Activated CD4-positive, alpha-beta T cell treated with anti-CD3 and anti-CD28 coated beads, Interleukin-2, amount 10 ng/mL, durations not matched to agents 24 days and 14 days (primary cell): ENCODE measurements at regions of chr11 and their contacts with region 1.

Region 1: GRCh38 chr11:125345421-125346178 is 150.5 kb downstream of the FEZ1 start:
- DNase-seq: peak; percentile 79
- H3K4me3 Mint-ChIP-seq: no peak overlapping the region
- H3K27ac Mint-ChIP-seq: no peak overlapping the region
- H3K4me1 Mint-ChIP-seq: no peaks in the 10 kb centered on the region
- H3K27me3 Mint-ChIP-seq: peaks cover 3% of the 10 kb centered on the region

Region 2: DNA sequence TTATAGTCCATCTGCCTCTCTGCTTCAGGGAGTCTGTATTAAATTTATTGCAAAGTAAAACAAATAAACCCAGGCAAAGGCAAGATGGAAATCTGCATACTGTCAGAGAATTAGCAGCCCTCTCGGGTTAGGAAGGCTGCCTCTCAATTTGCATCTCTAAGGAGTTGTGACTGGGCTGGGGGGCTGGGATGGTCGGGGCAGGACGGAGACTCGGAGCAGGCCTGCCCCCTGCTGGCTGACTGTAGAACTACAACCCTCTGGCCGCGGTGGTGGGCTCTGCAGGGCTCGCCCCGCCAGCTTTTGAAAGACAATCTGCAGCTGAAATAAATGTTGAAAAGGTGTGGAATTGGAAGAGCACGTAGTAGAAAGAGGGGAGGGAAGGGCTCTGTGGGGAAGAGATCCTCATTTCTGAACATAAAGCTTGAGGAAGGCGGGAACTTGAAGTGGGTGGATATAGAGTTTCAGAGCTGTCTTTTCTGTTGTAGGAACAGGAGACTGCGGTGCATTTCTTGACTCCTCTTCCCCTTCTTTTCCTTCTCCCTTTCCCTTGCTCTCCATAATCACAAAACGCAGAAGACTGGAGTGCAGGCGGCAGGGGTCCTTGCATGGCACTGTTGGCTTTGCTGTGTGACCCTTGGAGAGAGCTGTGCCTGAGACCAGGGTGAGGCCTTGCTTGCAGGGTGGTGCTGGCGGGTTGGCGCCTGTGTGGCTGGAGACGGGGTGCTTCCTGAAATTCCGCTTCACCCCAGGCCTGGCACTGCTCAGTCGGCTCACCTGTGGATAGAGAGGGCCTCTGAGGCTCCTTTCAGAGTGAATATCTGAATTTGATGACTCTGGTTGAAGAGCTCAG is 203.7 kb before region 1 on chr11:
- intact Hi-C with region 1: no loop called
- DNase-seq: peak; percentile 87
- H3K4me3 Mint-ChIP-seq: no peak overlapping the region
- H3K27ac Mint-ChIP-seq: no peak overlapping the region
- H3K4me1 Mint-ChIP-seq: peaks cover 3% of the 10 kb centered on the region
- H3K27me3 Mint-ChIP-seq: peaks cover 38% of the 10 kb centered on the region

Region 3: DNA sequence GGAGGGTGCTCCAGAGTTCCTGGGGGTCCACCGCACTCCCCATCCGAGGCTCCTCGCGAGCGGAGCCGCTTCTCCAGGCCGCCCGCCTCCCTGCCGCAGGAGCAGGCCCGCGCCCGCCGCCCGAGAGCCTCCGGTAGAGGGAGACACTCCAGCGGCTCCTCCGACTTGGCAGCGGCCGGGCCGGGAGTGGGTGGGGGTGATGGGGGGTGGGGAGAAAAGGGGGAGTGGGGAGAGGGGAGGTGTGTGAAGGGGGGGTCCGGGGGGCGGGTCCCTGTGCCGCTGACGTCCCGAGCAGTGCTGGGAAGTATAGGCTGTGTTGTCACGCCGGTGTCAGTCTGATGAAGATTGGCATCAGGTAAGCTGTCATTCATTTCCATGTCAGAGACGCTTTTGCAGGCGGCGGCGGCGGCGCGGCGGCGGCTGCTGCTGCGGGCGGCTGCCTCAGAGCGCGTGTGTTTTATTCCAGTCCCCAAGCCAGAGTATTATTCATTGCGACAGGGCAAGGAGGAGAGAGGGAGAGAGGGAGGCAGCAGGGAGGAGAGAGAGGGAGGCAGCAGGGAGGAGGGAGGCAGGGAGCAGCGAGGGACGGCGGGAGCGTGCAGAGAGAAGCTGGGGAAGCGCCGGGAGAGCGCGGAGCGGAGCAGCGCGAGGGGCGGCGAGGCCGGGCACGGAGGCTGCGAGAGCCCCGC is 181.0 kb before region 1 on chr11 and contains the start of gene PKNOX2:
- intact Hi-C with region 1: loop called (anchors 10 kb)
- DNase-seq: peak; percentile 87
- H3K4me3 Mint-ChIP-seq: peak within 1 kb of the TSS; percentile 94
- H3K27ac Mint-ChIP-seq: peak within 1 kb of the TSS; percentile 62
- H3K4me1 Mint-ChIP-seq: peaks cover 19% of the 10 kb centered on the region
- H3K27me3 Mint-ChIP-seq: peaks cover 74% of the 10 kb centered on the region
- total RNA-seq, gene PKNOX2: not detected in 2 replicates

Region 4: DNA sequence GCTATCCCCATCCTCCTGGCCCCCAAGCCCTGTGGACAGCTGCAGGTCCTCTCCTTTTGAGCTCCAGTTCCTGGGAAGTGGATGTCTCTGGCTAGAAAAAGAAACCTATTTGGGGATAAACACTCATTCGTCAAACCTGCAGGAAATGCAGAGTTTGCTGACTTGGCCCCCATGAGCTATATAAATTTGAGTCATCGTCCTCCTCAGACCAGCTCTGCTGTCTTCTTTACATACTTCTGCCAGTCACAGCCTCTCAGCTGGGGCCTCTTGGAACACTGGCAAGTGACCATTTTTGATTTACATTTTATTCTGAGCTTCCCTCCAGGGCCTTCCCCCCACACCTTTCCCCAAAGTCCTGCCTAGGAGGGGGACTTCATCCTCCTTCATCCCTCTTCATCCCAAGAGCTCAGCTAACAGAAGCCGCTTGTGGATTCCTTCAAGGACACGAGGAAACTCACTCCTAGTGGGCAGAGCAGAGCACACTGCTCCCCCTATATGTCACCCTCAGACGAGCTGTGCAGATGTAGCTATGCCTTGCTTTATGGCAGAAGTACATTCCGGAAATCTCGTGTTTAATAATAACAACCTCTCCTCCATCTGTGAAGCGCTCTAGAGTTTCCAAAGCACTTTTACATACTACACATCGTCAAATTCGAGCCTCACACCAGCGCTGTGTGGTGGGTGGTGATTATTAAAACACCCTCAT is 18.7 kb after region 1 on chr11:
- intact Hi-C with region 1: no loop called
- DNase-seq: no peak
- H3K4me3 Mint-ChIP-seq: no peak overlapping the region
- H3K27ac Mint-ChIP-seq: no peak overlapping the region
- H3K4me1 Mint-ChIP-seq: no peaks in the 10 kb centered on the region
- H3K27me3 Mint-ChIP-seq: peaks cover 5% of the 10 kb centered on the region